ENCODE measurements at regions of chr4 and their contacts with region 1.

Region 1: DNA sequence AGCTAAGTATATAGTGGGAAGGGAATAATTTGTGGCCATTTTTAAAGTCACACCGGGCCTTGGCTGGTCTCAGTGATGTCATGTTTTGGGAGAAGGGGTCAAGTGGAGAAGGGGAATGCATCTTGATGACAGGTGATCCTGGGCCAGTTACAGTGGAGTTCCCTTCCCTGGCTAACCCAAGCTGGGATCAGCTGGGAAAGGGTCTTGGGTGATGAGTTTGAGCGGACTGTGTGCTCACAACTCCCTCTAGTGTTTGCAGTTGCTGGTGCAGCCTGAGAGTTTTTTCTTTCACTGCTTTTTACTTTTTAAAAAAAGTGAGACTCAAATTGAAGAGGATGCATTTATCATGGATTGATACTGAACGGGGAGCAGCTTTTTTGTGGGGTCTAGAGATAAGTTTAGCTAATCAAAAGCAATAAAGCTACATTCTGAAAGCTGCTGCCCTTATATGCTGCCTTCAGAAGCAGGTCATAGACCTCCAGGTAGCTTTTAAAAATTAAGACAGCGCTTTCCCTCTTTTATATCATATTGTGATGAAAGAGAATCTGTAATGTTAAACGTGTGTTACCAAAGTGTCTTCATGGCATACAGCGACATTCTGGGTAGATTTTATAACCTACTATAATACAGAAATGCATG is 164.7 kb downstream of the DCLK2 start:
- DNase-seq: peak; percentile 74
- H3K4me3 ChIP-seq: peak overlapping the region in 1 of 2 experiments; percentile 18; a peak in 1 of 4 replicates
- H3K27ac ChIP-seq: no peak overlapping the region; a peak in 1 of 4 replicates
- H3K4me1 ChIP-seq: peaks cover 3 to 19% of the 10 kb centered on the region in 2 experiments; a peak in 3 of 4 replicates
- H3K27me3 ChIP-seq: no peaks in the 10 kb centered on the region
- CTCF ChIP-seq: peak; percentile 93
- EP300 ChIP-seq: no peak
- RAD21 ChIP-seq: peak; percentile 95

Region 2: DNA sequence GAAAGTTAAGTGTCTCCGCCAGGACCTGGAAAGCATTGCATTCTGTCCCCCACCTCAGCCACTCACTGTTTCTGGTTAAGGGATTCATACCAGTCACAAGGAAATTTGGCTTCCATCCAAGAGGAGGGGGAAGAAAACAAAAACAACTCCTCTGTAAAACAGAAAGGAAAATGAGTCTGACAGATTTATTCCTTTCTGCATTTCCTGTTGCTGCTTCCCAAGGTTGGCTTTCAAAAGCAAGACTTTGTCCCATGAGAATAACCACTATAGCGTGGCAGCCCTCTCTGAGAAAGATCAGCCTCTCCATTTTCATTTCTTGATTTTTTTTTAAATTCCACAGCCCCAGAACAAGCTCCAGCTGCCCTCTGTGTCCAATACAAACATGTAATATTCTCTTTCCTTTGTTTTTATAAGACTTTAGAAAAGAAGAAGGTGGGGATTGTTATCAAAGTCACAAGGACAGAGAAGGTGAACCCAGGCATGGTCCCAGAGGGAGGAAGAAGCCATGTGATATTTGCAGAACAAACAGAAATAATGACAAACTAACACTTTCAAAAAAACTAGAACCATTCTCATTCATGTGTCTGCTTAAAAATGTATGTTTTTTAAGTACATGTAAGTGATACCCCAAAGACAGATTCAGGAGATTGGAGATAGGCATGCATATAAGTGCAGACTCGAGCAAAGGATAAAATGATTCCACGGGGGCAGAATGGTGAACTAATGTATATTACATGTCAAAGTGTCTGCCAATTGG is 255.4 kb before region 1 on chr4:
- CTCF ChIA-PET with region 1: interaction called, 19 read pairs
- POLR2A ChIA-PET with region 1: no interaction called
- DNase-seq: peak; percentile 8
- H3K4me3 ChIP-seq: peak overlapping the region in 1 of 2 experiments; percentile 19; a peak in 1 of 4 replicates
- H3K27ac ChIP-seq: peak overlapping the region; percentile 54 to 95
- H3K4me1 ChIP-seq: peaks cover 13 to 16% of the 10 kb centered on the region in 2 experiments
- H3K27me3 ChIP-seq: no peaks in the 10 kb centered on the region
- CTCF ChIP-seq: no peak
- EP300 ChIP-seq: no peak
- RAD21 ChIP-seq: no peak

Region 3: GRCh38 chr4:150010525-150011126 is 232.3 kb before region 1 on chr4:
- CTCF ChIA-PET with region 1: interaction called, 197 read pairs
- POLR2A ChIA-PET with region 1: interaction called, 4 read pairs
- DNase-seq: peak; percentile 23
- H3K4me3 ChIP-seq: no peak overlapping the region
- H3K27ac ChIP-seq: no peak overlapping the region; a peak in 1 of 4 replicates
- H3K4me1 ChIP-seq: peaks cover 6 to 24% of the 10 kb centered on the region in 2 experiments
- H3K27me3 ChIP-seq: no peaks in the 10 kb centered on the region
- CTCF ChIP-seq: peak; percentile 71
- EP300 ChIP-seq: no peak
- RAD21 ChIP-seq: peak; percentile 83

Region 4: DNA sequence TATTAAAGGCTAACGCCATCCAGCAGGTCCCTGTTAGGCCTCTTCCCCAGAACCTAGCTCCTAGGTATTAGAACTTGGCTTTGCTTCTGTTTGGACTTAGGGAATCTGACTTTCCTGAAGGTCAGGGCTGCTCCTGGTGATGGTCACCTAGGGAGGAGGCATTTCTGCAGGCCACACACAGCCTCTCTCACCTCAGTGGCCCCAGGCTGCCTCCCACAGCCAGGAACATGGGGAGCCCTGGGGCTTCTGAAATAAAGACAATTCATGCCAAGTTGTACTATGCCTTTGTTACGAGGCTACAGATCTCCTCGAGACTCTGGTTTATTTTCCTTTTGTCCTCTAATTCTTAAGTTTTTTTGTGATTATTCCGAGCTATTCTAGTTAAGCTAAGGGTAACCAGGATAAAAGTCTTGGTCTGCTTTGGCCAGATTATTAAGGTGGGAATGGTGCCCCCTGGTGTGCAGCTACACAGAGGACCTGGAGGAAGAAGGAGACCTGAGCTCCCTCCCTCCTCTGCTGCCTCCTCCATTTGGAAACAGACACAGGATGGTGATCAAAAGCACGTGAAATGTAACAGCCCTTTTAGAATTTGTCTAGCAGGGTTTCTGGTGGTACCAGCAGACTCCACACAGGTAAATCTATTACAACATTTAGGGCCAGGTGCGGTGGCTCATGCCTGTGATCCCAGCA is 33.7 kb before region 1 on chr4:
- CTCF ChIA-PET with region 1: interaction called, 24 read pairs
- POLR2A ChIA-PET with region 1: no interaction called
- DNase-seq: peak; percentile 56
- H3K4me3 ChIP-seq: no peak overlapping the region
- H3K27ac ChIP-seq: no peak overlapping the region
- H3K4me1 ChIP-seq: peaks cover 19 to 31% of the 10 kb centered on the region in 2 experiments; a peak in 3 of 4 replicates
- H3K27me3 ChIP-seq: no peaks in the 10 kb centered on the region
- CTCF ChIP-seq: peak; percentile 71
- EP300 ChIP-seq: no peak
- RAD21 ChIP-seq: peak; percentile 84

Region 5: GRCh38 chr4:150232029-150232428 is 10.9 kb before region 1 on chr4:
- CTCF ChIA-PET with region 1: interaction called, 17 read pairs
- POLR2A ChIA-PET with region 1: no interaction called
- DNase-seq: no peak
- H3K4me3 ChIP-seq: no peak overlapping the region
- H3K27ac ChIP-seq: peak overlapping the region; percentile 47 to 82; a peak in 3 of 4 replicates
- H3K4me1 ChIP-seq: peaks cover 24 to 53% of the 10 kb centered on the region in 2 experiments
- H3K27me3 ChIP-seq: no peaks in the 10 kb centered on the region
- CTCF ChIP-seq: no peak
- EP300 ChIP-seq: no peak
- RAD21 ChIP-seq: no peak

Region 6: GRCh38 chr4:150310159-150310895 is 67.4 kb after region 1 on chr4:
- CTCF ChIA-PET with region 1: no interaction called
- POLR2A ChIA-PET with region 1: no interaction called
- DNase-seq: no peak
- H3K4me3 ChIP-seq: 0 out of 4 replicates have a peak overlapping the region, but pooled peaks of 1 of the 2 experiments have one; percentile 2
- H3K27ac ChIP-seq: peak overlapping the region; percentile 34 to 64
- H3K4me1 ChIP-seq: peaks cover 8 to 29% of the 10 kb centered on the region in 2 experiments; a peak in 3 of 4 replicates
- H3K27me3 ChIP-seq: no peaks in the 10 kb centered on the region
- CTCF ChIP-seq: no peak
- EP300 ChIP-seq: peak in 1 of 2 experiments; percentile 36; a peak in 1 of 4 replicates
- RAD21 ChIP-seq: no peak

Region 7: DNA sequence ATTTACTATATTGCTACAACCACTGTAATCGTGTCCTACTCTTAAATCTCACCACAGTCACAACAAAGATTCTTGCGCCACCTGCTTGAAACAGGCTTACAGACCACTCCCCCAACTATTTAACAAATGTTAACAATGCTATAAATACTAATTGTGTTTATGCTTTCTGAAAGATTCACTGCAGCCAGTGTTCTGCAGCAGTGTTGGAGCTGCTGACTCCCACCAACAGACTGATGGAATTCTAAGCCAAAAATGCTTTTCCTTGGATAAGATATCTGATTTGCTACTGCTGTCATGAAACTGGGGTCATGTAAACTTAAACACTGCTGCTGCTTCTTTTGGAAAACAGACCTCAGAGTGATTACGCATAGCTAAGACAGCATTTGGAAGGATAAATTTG is 94.8 kb after region 1 on chr4:
- CTCF ChIA-PET with region 1: no interaction called
- POLR2A ChIA-PET with region 1: no interaction called
- DNase-seq: no peak
- H3K4me3 ChIP-seq: no peak overlapping the region
- H3K27ac ChIP-seq: peak overlapping the region in 1 of 2 experiments; percentile 16; a peak in 1 of 4 replicates
- H3K4me1 ChIP-seq: peaks cover 0 to 8% of the 10 kb centered on the region in 2 experiments; a peak in 3 of 4 replicates
- H3K27me3 ChIP-seq: no peaks in the 10 kb centered on the region
- CTCF ChIP-seq: no peak
- EP300 ChIP-seq: no peak
- RAD21 ChIP-seq: no peak

Region 8: GRCh38 chr4:150363721-150364688 is 121.1 kb after region 1 on chr4:
- CTCF ChIA-PET with region 1: no interaction called
- POLR2A ChIA-PET with region 1: no interaction called
- DNase-seq: no peak
- H3K4me3 ChIP-seq: no peak overlapping the region
- H3K27ac ChIP-seq: no peak overlapping the region
- H3K4me1 ChIP-seq: peaks cover 7 to 21% of the 10 kb centered on the region in 2 experiments; a peak in 3 of 4 replicates
- H3K27me3 ChIP-seq: no peaks in the 10 kb centered on the region
- CTCF ChIP-seq: no peak
- EP300 ChIP-seq: no peak
- RAD21 ChIP-seq: no peak

Region 9: GRCh38 chr4:150739591-150739990 is 496.7 kb after region 1 on chr4:
- CTCF ChIA-PET with region 1: no interaction called
- POLR2A ChIA-PET with region 1: no interaction called
- DNase-seq: no peak
- H3K4me3 ChIP-seq: no peak overlapping the region; a peak in 1 of 4 replicates
- H3K27ac ChIP-seq: no peak overlapping the region
- H3K4me1 ChIP-seq: peaks cover 0 to 6% of the 10 kb centered on the region in 2 experiments; a peak in 3 of 4 replicates
- H3K27me3 ChIP-seq: no peaks in the 10 kb centered on the region
- CTCF ChIP-seq: no peak
- EP300 ChIP-seq: no peak
- RAD21 ChIP-seq: no peak

Measured in SK-N-SH (cell line).